ENCODE measurements at regions of chr7 and their contacts with region 1.

Region 1: DNA sequence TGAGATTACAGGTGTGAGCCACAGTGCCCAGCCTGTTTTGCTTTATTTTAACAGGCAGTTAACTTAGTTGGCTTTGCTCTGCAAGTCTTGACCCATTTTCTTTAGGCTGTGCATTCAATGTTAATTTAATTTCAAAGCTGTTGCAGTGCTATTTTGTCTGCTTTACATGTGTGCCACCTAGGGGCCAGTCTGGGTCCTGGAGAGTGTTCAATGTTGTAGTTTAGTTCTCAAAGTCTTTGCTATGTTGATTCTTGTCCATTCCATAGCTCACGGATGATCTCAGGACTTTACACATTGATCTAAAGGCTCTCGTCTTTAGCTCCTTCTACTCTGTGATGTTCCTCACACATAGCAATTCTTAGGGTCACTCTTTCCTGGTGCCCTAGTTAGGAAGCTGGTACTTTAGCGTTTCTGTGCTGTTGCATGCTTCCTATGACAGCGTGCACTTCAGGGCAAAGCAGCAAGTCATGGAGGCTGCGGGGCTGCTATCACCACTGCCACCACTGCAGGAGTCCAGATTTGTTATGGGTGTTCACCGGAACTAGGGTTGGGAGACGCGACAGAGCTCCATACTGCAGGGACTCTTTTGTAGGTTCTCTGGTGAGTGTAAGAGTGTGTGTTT is 16.4 kb upstream of the ABCA13 start:
- DNase-seq: peak; percentile 81
- H3K4me3 ChIP-seq: no peak overlapping the region
- H3K27ac ChIP-seq: no peak overlapping the region
- H3K4me1 ChIP-seq: no peaks in the 10 kb centered on the region
- H3K27me3 ChIP-seq: no peaks in the 10 kb centered on the region
- CTCF ChIP-seq: peak; percentile 54

Region 2: GRCh38 chr7:47937065-47937683 is 217.7 kb before region 1 on chr7:
- intact Hi-C with region 1: loop called (anchors 5 kb)
- DNase-seq: no peak
- H3K4me3 ChIP-seq: no peak overlapping the region
- H3K27ac ChIP-seq: no peak overlapping the region
- H3K4me1 ChIP-seq: peaks cover 11% of the 10 kb centered on the region
- H3K27me3 ChIP-seq: no peaks in the 10 kb centered on the region
- CTCF ChIP-seq: no peak

Measured in colonic mucosa (tissue), 4 donors.